ENCODE measurements at regions of chr11 and their contacts with region 1.

Region 1: GRCh38 chr11:118145285-118146227 is 7.1 kb downstream of the SCN4B start:
- DNase-seq: peak; percentile 96
- ATAC-seq: peak; percentile 96
- H3K4me3 Mint-ChIP-seq: peak overlapping the region; percentile 73
- H3K27ac Mint-ChIP-seq: no peak overlapping the region
- H3K4me1 Mint-ChIP-seq: peaks cover 2% of the 10 kb centered on the region
- H3K27me3 Mint-ChIP-seq: peaks cover 43% of the 10 kb centered on the region

Region 2: DNA sequence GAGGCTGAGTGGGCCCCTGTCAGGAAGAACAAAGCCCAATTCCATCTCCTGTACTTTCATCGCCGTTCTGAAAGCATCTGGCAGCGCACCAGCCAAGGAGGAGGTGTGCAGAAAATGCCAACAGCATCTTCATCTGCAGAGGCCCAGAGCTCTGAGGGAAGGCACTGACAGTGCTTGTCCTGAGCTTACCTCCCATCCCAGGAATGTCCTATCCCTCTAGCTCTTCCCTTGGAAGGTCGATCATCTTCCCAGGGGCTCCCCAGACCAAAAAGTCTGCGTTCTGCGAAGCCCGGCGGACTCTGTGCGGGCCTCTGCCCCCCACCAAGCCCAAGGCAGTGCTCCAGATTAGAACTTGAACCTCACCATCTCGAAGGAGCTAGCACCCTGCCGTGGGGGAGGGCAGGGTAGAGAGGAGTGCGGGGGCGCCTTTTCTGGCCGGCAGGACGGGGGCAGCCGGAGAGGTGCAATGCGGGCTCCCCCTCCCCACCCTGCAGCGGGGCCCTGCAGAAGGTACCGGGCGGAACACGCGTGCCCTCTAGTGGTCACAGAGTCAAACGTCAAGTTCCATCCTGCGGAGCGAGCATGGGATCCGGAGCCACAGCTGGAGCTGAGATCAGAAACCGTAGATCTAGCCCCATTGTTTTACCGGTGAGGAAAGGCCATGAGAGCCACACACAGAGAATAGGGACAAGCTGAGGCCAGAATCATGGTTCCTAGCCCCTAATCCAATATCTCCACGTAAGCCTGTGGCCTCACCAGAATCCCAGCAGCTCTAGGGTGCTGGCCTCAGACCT is 25.9 kb after region 1 on chr11:
- CTCF ChIA-PET with region 1: interaction called, 120 read pairs
- POLR2A ChIA-PET with region 1: no interaction called
- intact Hi-C with region 1: loop called (anchors 1 kb)
- DNase-seq: peak; percentile 91
- ATAC-seq: peak; percentile 95
- H3K4me3 Mint-ChIP-seq: no peak overlapping the region
- H3K27ac Mint-ChIP-seq: no peak overlapping the region
- H3K4me1 Mint-ChIP-seq: no peaks in the 10 kb centered on the region
- H3K27me3 Mint-ChIP-seq: peaks cover 6% of the 10 kb centered on the region

Region 3: GRCh38 chr11:118272001-118272400 is 126.4 kb after region 1 on chr11:
- CTCF ChIA-PET with region 1: no interaction called
- POLR2A ChIA-PET with region 1: no interaction called
- intact Hi-C with region 1: no loop called
- DNase-seq: no peak
- ATAC-seq: no peak
- H3K4me3 Mint-ChIP-seq: no peak overlapping the region
- H3K27ac Mint-ChIP-seq: no peak overlapping the region
- H3K4me1 Mint-ChIP-seq: peaks cover 31% of the 10 kb centered on the region
- H3K27me3 Mint-ChIP-seq: no peaks in the 10 kb centered on the region

Region 4: GRCh38 chr11:118353084-118353710 is 207.6 kb after region 1 on chr11:
- CTCF ChIA-PET with region 1: interaction called, 3 read pairs
- POLR2A ChIA-PET with region 1: no interaction called
- intact Hi-C with region 1: loop called in 1 of 2 experiments (anchors 5 kb)
- DNase-seq: no peak
- ATAC-seq: no peak
- H3K4me3 Mint-ChIP-seq: no peak overlapping the region
- H3K27ac Mint-ChIP-seq: no peak overlapping the region
- H3K4me1 Mint-ChIP-seq: peaks cover 28% of the 10 kb centered on the region
- H3K27me3 Mint-ChIP-seq: no peaks in the 10 kb centered on the region

Region 5: GRCh38 chr11:118488480-118489109 is 343.0 kb after region 1 on chr11:
- CTCF ChIA-PET with region 1: interaction called, 3 read pairs
- POLR2A ChIA-PET with region 1: no interaction called
- intact Hi-C with region 1: loop called in 1 of 2 experiments (anchors 2 kb)
- DNase-seq: peak; percentile 90
- ATAC-seq: peak; percentile 71
- H3K4me3 Mint-ChIP-seq: no peak overlapping the region
- H3K27ac Mint-ChIP-seq: peak overlapping the region; percentile 10
- H3K4me1 Mint-ChIP-seq: peaks cover 5% of the 10 kb centered on the region
- H3K27me3 Mint-ChIP-seq: no peaks in the 10 kb centered on the region

Region 6: GRCh38 chr11:118610804-118611795 is 465.5 kb after region 1 on chr11:
- CTCF ChIA-PET with region 1: no interaction called
- POLR2A ChIA-PET with region 1: no interaction called
- intact Hi-C with region 1: loop called in 1 of 2 experiments (anchors 1 kb)
- DNase-seq: peak; percentile 93
- ATAC-seq: peak; percentile 70
- H3K4me3 Mint-ChIP-seq: peak overlapping the region; percentile 72
- H3K27ac Mint-ChIP-seq: no peak overlapping the region
- H3K4me1 Mint-ChIP-seq: peaks cover 21% of the 10 kb centered on the region
- H3K27me3 Mint-ChIP-seq: peaks cover 14% of the 10 kb centered on the region